Activated T-helper 1 cell treated with anti-CD3 and anti-CD28 coated beads, Interleukin-12 subunit alpha, Interleukin-12 subunit beta, Interleukin-2, Interleukin-4 antibody, amounts not matched to agents 30 ng/mL and 10 ng/mL and 1 ng/mL, durations not matched to agents 14 hours and 24 hours and 36 hours (primary cell): ENCODE measurements at regions of chr16 and their contacts with region 1.

Region 1: GRCh38 chr16:29862884-29863668 is at the start of gene CDIPT:
- DNase-seq: peak; percentile 90
- H3K4me3 Mint-ChIP-seq: peak within 1 kb of the TSS; percentile 97
- H3K27ac Mint-ChIP-seq: peak within 1 kb of the TSS; percentile 100
- H3K4me1 Mint-ChIP-seq: peaks cover 24% of the 10 kb centered on the region
- H3K27me3 Mint-ChIP-seq: no peaks in the 10 kb centered on the region
- total RNA-seq, gene CDIPT: 83.7 and 85.5 TPM in 2 replicates

Region 2: GRCh38 chr16:29710227-29711219 is 152.6 kb before region 1 on chr16:
- intact Hi-C with region 1: no loop called
- DNase-seq: peak; percentile 37
- H3K4me3 Mint-ChIP-seq: no peak overlapping the region
- H3K27ac Mint-ChIP-seq: no peak overlapping the region
- H3K4me1 Mint-ChIP-seq: peaks cover 16% of the 10 kb centered on the region
- H3K27me3 Mint-ChIP-seq: peaks cover 6% of the 10 kb centered on the region

Region 3: GRCh38 chr16:29805378-29806098 is 57.5 kb before region 1 on chr16:
- intact Hi-C with region 1: loop called (anchors 1 kb)
- DNase-seq: peak; percentile 97
- H3K4me3 Mint-ChIP-seq: peak overlapping the region; percentile 100
- H3K27ac Mint-ChIP-seq: peak overlapping the region; percentile 100
- H3K4me1 Mint-ChIP-seq: peaks cover 42% of the 10 kb centered on the region
- H3K27me3 Mint-ChIP-seq: no peaks in the 10 kb centered on the region

Region 4: GRCh38 chr16:29877266-29877961 is 14.3 kb after region 1 on chr16:
- intact Hi-C with region 1: loop called (anchors 1 kb)
- DNase-seq: peak; percentile 59
- H3K4me3 Mint-ChIP-seq: peak overlapping the region; percentile 46
- H3K27ac Mint-ChIP-seq: no peak overlapping the region
- H3K4me1 Mint-ChIP-seq: peaks cover 14% of the 10 kb centered on the region
- H3K27me3 Mint-ChIP-seq: peaks cover 28% of the 10 kb centered on the region

Region 5: GRCh38 chr16:29961479-29962343 is 98.6 kb after region 1 on chr16 and contains the start of gene TMEM219:
- intact Hi-C with region 1: loop called (anchors 1 kb)
- DNase-seq: peak; percentile 95
- H3K4me3 Mint-ChIP-seq: peak within 1 kb of the TSS; percentile 86
- H3K27ac Mint-ChIP-seq: peak within 1 kb of the TSS; percentile 83
- H3K4me1 Mint-ChIP-seq: peaks cover 24% of the 10 kb centered on the region
- H3K27me3 Mint-ChIP-seq: no peaks in the 10 kb centered on the region
- total RNA-seq, gene TMEM219: 41.5 and 43.7 TPM in 2 replicates

Region 6: GRCh38 chr16:30018731-30019158 is 155.7 kb after region 1 on chr16:
- intact Hi-C with region 1: loop called (anchors 1 kb)
- DNase-seq: no peak
- H3K4me3 Mint-ChIP-seq: no peak overlapping the region
- H3K27ac Mint-ChIP-seq: peak overlapping the region; percentile 1
- H3K4me1 Mint-ChIP-seq: peaks cover 17% of the 10 kb centered on the region
- H3K27me3 Mint-ChIP-seq: peaks cover 12% of the 10 kb centered on the region

Region 7: GRCh38 chr16:30091474-30092372 is 228.6 kb after region 1 on chr16 and contains the start of gene TBX6:
- intact Hi-C with region 1: no loop called
- DNase-seq: peak; percentile 94
- H3K4me3 Mint-ChIP-seq: peak within 1 kb of the TSS; percentile 88
- H3K27ac Mint-ChIP-seq: peak within 1 kb of the TSS; percentile 90
- H3K4me1 Mint-ChIP-seq: peaks cover 56% of the 10 kb centered on the region
- H3K27me3 Mint-ChIP-seq: no peaks in the 10 kb centered on the region
- total RNA-seq, gene TBX6: 1.6 and 1.8 TPM in 2 replicates

Region 8: GRCh38 chr16:31073968-31074813 is 1211.1 kb after region 1 on chr16 and contains the starts of genes ZNF646 and ZNF668:
- intact Hi-C with region 1: loop called (anchors 5 kb)
- DNase-seq: peak; percentile 98
- H3K4me3 Mint-ChIP-seq: peak within 1 kb of the TSS; percentile 99
- H3K27ac Mint-ChIP-seq: peak within 1 kb of the TSS; percentile 96
- H3K4me1 Mint-ChIP-seq: peaks cover 35% of the 10 kb centered on the region
- H3K27me3 Mint-ChIP-seq: no peaks in the 10 kb centered on the region
- total RNA-seq, gene ZNF646: 25.3 and 26.1 TPM in 2 replicates
- total RNA-seq, gene ZNF668: 14.9 and 15.1 TPM in 2 replicates